Cardiac septum (tissue), 1 donor: ENCODE measurements at regions of chrX and their contacts with region 1.

Region 1: GRCh38 chrX:102950908-102951866 is 14.1 kb downstream of the RAB40AL start:
- DNase-seq: no peak

Region 2: GRCh38 chrX:103124284-103124683 is 173.1 kb after region 1 on chrX:
- intact Hi-C with region 1: no loop called
- DNase-seq: no peak

Region 3: DNA sequence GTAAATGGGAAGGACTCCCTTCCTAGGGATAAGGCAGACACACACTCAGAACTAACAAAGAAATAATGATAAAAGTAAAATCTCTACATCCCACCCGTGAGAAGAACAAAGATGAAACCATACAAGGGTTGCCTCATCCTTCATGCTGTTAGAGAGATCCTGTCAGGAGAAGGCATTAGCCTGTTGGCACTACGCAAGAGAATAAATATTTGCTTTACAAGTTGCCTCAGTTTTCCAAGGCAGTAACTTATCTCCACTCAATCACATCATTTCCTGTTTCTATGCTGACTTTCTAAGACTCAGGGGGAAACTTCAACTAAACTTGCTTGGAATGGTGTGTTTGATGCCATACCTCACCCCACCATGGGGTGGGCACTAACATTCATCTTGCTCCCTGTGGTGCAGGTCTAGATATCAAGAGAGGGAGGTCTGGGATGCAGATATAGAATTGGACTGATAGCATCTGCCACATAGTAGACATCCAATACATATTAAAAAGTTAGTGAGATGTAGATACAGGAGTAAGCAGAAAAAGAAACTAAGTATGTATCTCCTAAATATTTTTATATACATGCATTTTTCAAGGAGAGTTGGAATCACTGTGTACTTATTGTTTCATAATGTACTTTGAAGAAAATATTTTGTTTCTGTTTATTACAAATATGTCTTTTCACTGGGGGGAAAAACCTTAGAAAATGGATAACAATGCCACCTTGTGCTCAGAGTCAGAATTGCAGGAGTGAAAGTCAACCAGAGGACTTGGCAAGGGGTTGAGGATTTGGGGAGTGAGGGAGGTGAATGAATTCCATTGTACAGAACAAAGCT is 206.5 kb after region 1 on chrX:
- intact Hi-C with region 1: loop called (anchors 5 kb)
- DNase-seq: no peak

Region 4: DNA sequence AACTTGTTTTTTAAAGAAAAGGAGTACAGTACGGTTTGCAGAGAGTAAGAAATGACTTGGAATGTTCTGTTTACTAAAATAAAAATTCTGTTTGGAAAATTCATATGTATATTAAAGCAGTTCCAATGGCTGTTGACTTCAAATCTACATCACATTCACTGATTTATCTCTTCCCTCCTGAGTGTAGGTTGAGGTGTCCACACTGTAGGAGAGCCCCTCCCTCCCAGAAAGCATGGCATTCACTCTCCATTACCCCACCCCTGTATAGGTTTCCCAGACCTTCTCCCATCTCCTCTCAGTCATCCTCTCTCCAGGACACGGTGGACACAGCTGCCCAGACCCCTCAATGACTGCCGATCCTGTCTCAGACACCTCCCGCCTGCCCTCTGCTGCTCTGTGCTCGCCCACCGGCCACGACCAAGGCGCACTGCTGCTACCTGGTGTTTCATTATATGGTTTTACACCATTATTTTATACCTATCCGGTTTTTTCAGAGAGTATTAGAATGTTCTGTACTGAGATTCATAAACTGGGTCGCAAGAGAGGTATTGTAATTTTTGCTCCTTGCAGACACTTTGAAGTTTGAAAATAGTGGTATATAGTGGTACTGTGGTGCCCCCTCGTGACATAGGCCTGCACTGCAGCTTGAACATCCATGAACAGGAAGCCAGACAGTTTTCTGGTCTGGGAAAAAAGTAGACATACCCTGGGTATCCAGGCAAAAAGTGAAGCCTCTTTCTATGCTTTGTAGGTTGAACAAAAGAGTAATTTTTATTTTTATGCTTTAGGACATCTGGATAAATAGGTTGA is 225.0 kb after region 1 on chrX:
- intact Hi-C with region 1: loop called (anchors 5 kb)
- DNase-seq: no peak